Activated CD8-positive, alpha-beta T cell treated with anti-CD3 and anti-CD28 coated beads, Interleukin-2, amount 10 ng/mL, durations not matched to agents 7 days and 5 days (primary cell): ENCODE measurements at regions of chrX and their contacts with region 1.

Region 1: DNA sequence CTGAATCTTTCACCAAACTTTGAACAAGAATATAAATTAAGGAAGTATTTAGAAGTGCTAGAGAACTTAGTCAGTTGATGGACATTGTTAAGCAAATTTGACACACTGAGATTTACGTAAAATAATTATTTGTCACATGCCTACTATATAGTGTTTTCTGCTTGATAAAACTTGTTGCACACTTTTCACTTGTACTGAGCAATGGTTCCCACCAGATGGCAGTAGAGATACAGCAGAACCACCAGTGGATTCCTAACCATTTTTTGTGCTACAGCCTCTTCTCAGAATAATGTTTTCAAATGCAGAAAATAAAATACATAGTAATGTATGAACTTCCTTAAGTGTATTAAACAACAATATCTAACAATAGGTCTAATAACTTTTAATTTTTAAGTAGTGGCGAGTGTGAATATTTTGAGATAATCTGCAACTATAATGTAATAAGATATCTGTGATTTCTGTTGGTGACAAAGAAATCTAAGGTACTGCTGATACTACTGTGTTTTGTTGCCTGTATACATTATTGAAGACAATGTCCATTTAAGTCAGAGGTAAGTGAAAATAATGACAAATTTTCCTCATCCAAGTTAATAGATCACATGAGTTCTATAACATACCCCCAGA is 81.2 kb downstream of the APOOL start:
- DNase-seq: peak; percentile 24
- ATAC-seq: no peak
- H3K4me3 Mint-ChIP-seq: no peak overlapping the region
- H3K27ac Mint-ChIP-seq: no peak overlapping the region
- H3K4me1 Mint-ChIP-seq: no peaks in the 10 kb centered on the region
- H3K27me3 Mint-ChIP-seq: no peaks in the 10 kb centered on the region

Region 2: DNA sequence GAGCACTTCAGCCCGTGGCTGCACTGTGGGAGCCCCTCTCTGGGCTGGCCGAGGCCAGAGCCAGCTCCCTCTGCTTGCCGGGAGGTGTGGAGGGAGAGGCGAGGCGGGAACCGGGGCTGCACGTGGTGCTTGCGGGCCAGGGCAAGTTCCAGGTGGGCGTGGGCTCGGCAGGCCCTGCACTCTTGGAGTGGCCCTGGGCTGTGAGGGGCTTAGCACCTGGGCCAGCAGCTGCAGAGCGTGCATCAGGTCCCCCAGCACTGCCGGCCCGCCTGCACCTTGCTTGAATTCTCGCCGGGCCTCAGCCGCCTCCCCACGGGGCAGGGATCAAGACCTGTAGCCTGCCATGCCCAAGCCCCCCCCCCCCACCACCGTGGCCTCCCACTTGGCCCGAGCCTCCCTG is 110.1 kb before region 1 on chrX:
- CTCF ChIA-PET with region 1: no interaction called
- POLR2A ChIA-PET with region 1: no interaction called
- DNase-seq: no peak
- ATAC-seq: no peak
- H3K4me3 Mint-ChIP-seq: no peak overlapping the region
- H3K27ac Mint-ChIP-seq: no peak overlapping the region
- H3K4me1 Mint-ChIP-seq: no peaks in the 10 kb centered on the region
- H3K27me3 Mint-ChIP-seq: no peaks in the 10 kb centered on the region

Region 3: GRCh38 chrX:85111347-85111746 is 26.5 kb after region 1 on chrX:
- CTCF ChIA-PET with region 1: interaction called, 10 read pairs
- POLR2A ChIA-PET with region 1: no interaction called
- DNase-seq: no peak
- ATAC-seq: no peak
- H3K4me3 Mint-ChIP-seq: no peak overlapping the region
- H3K27ac Mint-ChIP-seq: no peak overlapping the region
- H3K4me1 Mint-ChIP-seq: no peaks in the 10 kb centered on the region
- H3K27me3 Mint-ChIP-seq: no peaks in the 10 kb centered on the region

Region 4: DNA sequence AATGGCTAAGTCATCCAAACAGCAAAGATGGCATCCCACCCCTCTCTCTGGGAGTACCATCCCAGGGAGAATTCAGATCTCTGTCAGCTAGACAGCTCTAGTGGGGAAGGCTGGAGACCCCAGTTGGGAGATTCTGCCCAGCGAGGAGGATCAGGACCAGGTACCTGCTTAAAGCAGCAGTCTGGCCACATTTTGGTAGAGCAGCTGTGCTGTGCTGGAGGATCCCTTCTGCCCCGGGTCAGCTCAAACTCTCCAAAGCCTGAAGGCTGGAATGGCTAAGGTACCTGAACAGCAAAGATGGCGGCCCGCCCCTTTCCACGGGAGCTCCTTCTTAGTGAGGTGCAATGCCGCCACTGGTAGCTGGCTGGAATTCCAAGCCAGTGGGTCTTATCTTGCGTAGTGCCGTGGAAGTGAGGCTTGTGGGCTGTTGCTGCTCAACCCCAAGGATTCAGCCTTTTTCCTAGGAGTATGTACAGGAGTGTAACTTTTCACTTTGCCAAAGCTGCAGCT is 118.6 kb after region 1 on chrX:
- CTCF ChIA-PET with region 1: no interaction called
- POLR2A ChIA-PET with region 1: no interaction called
- DNase-seq: no peak
- ATAC-seq: no peak
- H3K4me3 Mint-ChIP-seq: no peak overlapping the region
- H3K27ac Mint-ChIP-seq: no peak overlapping the region
- H3K4me1 Mint-ChIP-seq: no peaks in the 10 kb centered on the region
- H3K27me3 Mint-ChIP-seq: no peaks in the 10 kb centered on the region